Right cardiac atrium (tissue), 5 donors: ENCODE measurements at regions of chr1 and their contacts with region 1.

Region 1: GRCh38 chr1:145918144-145918992 is at the start of gene PEX11B:
- DNase-seq: peak; percentile 89 to 96 (median 96)
- ATAC-seq: peak; percentile 96
- H3K4me3 ChIP-seq: peak within 1 kb of the TSS; percentile 72
- H3K27ac ChIP-seq: peak within 1 kb of the TSS; percentile 76
- H3K4me1 ChIP-seq: peaks cover 2% of the 10 kb centered on the region
- H3K27me3 ChIP-seq: no peaks in the 10 kb centered on the region
- total RNA-seq, gene PEX11B: 21.4 to 23.7 (median 22.4) TPM

Region 2: GRCh38 chr1:145845514-145846161 is 72.7 kb before region 1 on chr1 and contains the start of gene NUDT17:
- intact Hi-C with region 1: loop called in 1 of 4 experiments (anchors 10 kb)
- DNase-seq: peak; percentile 87 to 94 (median 92)
- ATAC-seq: peak; percentile 85 to 88
- H3K4me3 ChIP-seq: peak within 1 kb of the TSS; percentile 63
- H3K27ac ChIP-seq: peak within 1 kb of the TSS; percentile 63
- H3K4me1 ChIP-seq: no peaks in the 10 kb centered on the region
- H3K27me3 ChIP-seq: no peaks in the 10 kb centered on the region
- total RNA-seq, gene NUDT17: 4.1 to 7.2 (median 5.1) TPM

Region 3: DNA sequence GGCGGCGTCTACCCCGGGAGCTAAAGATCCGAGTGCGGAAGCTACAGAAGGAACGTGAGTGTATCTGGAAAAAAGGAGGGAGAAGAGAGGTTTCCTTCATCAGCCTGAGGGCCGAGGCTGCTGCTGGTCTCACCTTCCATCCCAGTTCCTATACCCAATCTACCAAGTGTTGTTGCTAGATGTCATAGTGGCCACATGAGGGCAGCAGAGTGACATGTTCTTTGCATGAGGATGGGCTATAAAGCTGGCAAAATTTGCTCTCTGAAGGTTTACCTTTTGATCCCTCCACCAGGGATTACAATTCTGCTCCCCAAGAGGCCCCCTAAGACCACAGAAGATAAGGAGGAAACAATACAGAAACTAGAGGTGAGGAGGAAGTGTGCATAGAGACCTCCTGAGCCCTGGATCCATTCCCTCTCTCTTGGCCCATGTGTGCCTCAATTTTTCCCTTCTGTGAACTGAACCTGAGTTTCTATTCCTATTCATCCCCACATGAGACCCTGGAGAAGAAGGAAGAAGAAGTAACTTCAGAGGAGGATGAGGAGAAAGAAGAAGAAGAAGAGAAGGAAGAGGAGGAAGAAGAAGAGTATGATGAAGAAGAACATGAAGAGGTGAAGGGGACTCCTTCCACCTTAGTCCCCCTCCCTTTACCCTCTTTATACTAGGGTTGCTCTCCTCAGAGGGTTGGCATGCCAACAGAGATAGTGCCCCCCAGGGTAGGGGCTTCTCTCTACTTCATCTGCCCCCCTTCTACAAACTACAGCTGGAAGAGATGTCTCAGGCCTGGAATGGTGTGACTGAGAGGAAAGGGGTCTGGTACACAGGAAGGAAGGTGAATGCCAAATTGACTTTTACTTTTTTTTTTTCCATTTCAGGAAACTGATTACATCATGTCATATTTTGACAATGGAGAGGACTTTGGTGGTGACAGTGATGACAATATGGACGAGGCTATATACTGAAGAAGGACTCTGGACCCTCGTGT is 59.4 kb after region 1 on chr1:
- intact Hi-C with region 1: no loop called
- DNase-seq: peak; percentile 68 to 86 (median 76)
- ATAC-seq: peak; percentile 10 to 42
- H3K4me3 ChIP-seq: no peak overlapping the region
- H3K27ac ChIP-seq: peak overlapping the region; percentile 97
- H3K4me1 ChIP-seq: peaks cover 25% of the 10 kb centered on the region
- H3K27me3 ChIP-seq: no peaks in the 10 kb centered on the region

Region 4: DNA sequence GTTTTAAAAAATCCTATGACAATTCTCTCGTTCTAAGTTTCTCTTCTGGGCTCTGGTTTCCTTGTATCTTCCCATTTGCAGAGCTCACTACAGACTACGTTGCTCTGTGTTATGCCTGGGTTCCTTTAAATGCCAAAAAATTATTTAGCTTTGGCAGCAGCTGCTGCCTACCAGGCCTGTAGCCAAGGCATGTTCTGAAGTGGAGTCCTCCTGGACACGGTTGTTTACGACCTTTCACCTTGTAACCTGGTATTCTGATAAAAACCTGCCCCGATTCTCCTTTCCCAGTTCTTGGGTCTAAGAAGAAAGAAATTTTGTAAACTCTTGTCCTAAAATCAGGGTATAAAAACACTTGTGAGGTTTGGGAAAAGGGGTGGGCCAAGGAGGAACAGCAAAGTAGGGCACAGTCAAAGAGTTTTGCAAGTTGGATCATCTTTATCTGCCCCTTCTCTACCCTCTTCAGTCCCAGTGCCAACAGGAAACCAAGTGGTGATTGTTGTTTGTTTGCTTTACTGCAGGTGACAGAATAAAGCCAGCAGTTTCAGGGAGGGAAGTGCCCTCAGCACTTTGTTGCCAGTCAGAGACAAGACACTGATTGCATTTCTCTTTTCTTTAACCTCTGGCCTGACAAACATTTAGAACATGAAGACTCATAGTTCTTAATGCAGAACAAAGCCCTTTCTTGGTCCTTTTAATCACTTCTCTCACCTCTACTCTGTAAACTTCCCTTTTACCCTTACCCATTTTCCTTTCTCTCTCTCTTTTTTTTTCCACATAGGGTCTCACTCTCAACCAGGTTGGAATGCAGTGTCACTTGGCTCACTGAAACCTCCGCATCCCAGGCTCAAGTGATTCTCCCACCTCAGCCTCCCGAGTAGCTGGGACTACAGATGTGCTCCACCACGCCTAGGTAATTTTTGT is 81.2 kb after region 1 on chr1:
- intact Hi-C with region 1: no loop called
- DNase-seq: peak in 2 of 3 donors; percentile 39 to 81
- ATAC-seq: peak; percentile 12 to 34
- H3K4me3 ChIP-seq: peak overlapping the region; percentile 37
- H3K27ac ChIP-seq: peak overlapping the region; percentile 98
- H3K4me1 ChIP-seq: peaks cover 12% of the 10 kb centered on the region
- H3K27me3 ChIP-seq: no peaks in the 10 kb centered on the region